Calu3 (cell line): ENCODE measurements at regions of chr9 and their contacts with region 1.

Region 1: DNA sequence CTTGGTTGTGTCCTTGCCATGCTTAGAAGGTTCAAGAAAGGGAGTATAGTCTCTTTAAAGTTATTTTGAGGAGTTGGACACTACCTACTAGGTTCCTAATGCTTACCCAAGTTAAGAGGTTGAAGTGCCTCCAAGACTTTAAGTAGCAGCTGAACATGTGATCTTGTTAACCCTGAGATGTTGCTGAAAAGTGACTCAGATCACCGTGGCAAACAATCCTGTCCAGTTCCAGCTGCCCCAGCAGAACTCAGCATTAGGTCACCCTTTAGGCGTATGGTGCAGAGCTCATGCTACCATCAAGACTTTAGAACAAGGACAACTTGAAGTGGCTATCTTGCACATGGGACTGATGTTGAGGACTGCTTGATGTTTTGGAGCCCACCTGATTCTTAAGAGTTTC is 22.5 kb downstream of the ZNF462 start:
- DNase-seq: peak; percentile 6
- H3K4me3 Mint-ChIP-seq: no peak overlapping the region
- H3K27ac Mint-ChIP-seq: no peak overlapping the region
- H3K4me1 Mint-ChIP-seq: peaks cover 64% of the 10 kb centered on the region
- H3K27me3 Mint-ChIP-seq: no peaks in the 10 kb centered on the region
- CTCF ChIP-seq: no peak

Region 2: DNA sequence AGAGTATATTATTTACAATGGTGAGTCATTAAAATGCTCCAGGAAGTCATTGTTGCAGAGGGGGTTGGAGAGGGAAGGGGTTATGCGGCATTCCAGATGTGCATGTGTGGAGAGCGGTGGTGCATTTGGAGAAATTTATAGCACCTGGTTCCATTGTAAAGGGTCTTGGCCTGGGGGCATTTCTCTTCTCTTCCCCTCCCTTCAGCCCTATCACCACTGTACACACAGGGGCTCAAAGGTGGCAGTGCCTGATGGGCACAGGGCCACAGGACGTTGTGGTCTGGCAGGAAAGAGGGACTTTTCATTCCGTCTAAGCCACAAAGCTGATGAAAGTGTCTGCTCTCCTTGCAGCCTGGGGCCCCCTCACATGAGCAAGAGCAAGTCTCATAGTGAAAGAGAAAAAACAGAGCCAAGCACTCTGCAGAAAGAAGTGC is 464.9 kb before region 1 on chr9:
- CTCF ChIA-PET with region 1: interaction called, 3 read pairs
- intact Hi-C with region 1: loop called (anchors 10 kb)
- DNase-seq: peak; percentile 26
- H3K4me3 Mint-ChIP-seq: peak overlapping the region; percentile 24
- H3K27ac Mint-ChIP-seq: peak overlapping the region; percentile 71
- H3K4me1 Mint-ChIP-seq: peaks cover 36% of the 10 kb centered on the region
- H3K27me3 Mint-ChIP-seq: no peaks in the 10 kb centered on the region
- CTCF ChIP-seq: no peak

Region 3: DNA sequence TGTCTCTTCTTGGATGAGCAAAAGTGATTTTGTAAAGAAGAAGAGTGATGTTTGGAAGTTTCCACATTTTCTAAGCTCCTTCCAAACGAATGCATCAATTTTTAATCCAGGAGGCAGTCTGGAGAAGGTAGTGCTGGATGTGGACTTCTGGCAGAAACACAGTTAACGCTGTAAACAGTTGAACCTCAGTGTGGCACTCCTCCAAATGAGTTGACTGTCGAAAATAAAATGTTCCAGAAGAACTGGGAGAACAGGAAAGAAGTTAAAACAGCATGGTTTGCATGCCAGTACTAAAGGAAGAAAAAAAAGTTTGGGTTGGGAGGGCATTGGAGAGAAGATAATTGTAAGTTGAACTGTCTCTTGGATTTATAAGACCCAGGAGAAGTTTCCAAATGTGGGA is 16.0 kb before region 1 on chr9:
- CTCF ChIA-PET with region 1: interaction called, 6 read pairs
- intact Hi-C with region 1: loop called (anchors 2 kb)
- DNase-seq: no peak
- H3K4me3 Mint-ChIP-seq: no peak overlapping the region
- H3K27ac Mint-ChIP-seq: no peak overlapping the region
- H3K4me1 Mint-ChIP-seq: peaks cover 62% of the 10 kb centered on the region
- H3K27me3 Mint-ChIP-seq: no peaks in the 10 kb centered on the region
- CTCF ChIP-seq: no peak

Region 4: DNA sequence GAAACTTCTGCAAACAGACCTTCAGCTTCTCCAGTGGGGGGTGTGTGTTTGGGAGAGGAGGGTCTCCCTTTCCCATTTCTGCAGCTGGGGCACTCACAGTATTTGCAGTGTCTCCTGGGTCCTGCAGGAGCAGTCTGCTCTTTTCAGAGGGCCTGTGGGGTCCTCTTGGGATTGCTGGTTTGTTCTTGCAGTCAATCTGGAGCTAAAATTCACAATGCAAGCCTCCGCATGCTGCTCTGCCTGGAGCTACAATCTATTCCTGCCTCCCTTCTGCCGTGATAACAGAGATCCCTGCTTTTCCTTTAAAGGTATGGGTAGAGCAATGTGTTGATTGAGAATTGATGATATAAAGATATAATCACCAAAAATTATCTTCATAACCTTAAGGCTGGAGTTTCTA is 20.7 kb after region 1 on chr9:
- CTCF ChIA-PET with region 1: no interaction called
- intact Hi-C with region 1: no loop called
- DNase-seq: no peak
- H3K4me3 Mint-ChIP-seq: no peak overlapping the region
- H3K27ac Mint-ChIP-seq: no peak overlapping the region
- H3K4me1 Mint-ChIP-seq: peaks cover 25% of the 10 kb centered on the region
- H3K27me3 Mint-ChIP-seq: no peaks in the 10 kb centered on the region
- CTCF ChIP-seq: no peak

Region 5: GRCh38 chr9:106921341-106921899 is 36.0 kb after region 1 on chr9:
- CTCF ChIA-PET with region 1: interaction called, 5 read pairs
- intact Hi-C with region 1: loop called (anchors 5 kb)
- DNase-seq: peak; percentile 36
- H3K4me3 Mint-ChIP-seq: peak overlapping the region; percentile 66
- H3K27ac Mint-ChIP-seq: peak overlapping the region; percentile 89
- H3K4me1 Mint-ChIP-seq: peaks cover 44% of the 10 kb centered on the region
- H3K27me3 Mint-ChIP-seq: no peaks in the 10 kb centered on the region
- CTCF ChIP-seq: no peak